OCI-LY7 (cell line): ENCODE measurements at regions of chr10 and their contacts with region 1.

Region 1: GRCh38 chr10:26437637-26438461 is at the start of gene APBB1IP:
- DNase-seq: peak; percentile 94
- H3K4me3 ChIP-seq: peak within 1 kb of the TSS; percentile 93
- H3K27ac ChIP-seq: peak within 1 kb of the TSS; percentile 92
- H3K4me1 ChIP-seq: peaks cover 42% of the 10 kb centered on the region
- CTCF ChIP-seq: no peak
- total RNA-seq, gene APBB1IP: 58.1 and 65.8 TPM in 2 replicates

Region 2: GRCh38 chr10:26310361-26310760 is 127.5 kb before region 1 on chr10:
- CTCF ChIA-PET with region 1: no interaction called
- POLR2A ChIA-PET with region 1: no interaction called
- intact Hi-C with region 1: loop called (anchors 1 kb)
- DNase-seq: peak; percentile 95
- H3K4me3 ChIP-seq: peak overlapping the region; percentile 66
- H3K27ac ChIP-seq: peak overlapping the region; percentile 88
- H3K4me1 ChIP-seq: peaks cover 63% of the 10 kb centered on the region
- CTCF ChIP-seq: no peak

Region 3: GRCh38 chr10:26372513-26373354 is 65.1 kb before region 1 on chr10:
- CTCF ChIA-PET with region 1: no interaction called
- POLR2A ChIA-PET with region 1: interaction called, 4 read pairs
- intact Hi-C with region 1: loop called (anchors 1 kb)
- DNase-seq: peak; percentile 85
- H3K4me3 ChIP-seq: peak overlapping the region; percentile 54
- H3K27ac ChIP-seq: peak overlapping the region; percentile 93
- H3K4me1 ChIP-seq: peaks cover 43% of the 10 kb centered on the region
- CTCF ChIP-seq: no peak; the same call in 1 of the 2 replicates

Region 4: GRCh38 chr10:26457088-26457487 is 19.2 kb after region 1 on chr10:
- CTCF ChIA-PET with region 1: interaction called, 3 read pairs
- POLR2A ChIA-PET with region 1: interaction called, 26 read pairs
- intact Hi-C with region 1: loop called (anchors 2 kb)
- DNase-seq: peak; percentile 94
- H3K4me3 ChIP-seq: peak overlapping the region; percentile 57
- H3K27ac ChIP-seq: peak overlapping the region; percentile 95
- H3K4me1 ChIP-seq: peaks cover 78% of the 10 kb centered on the region
- CTCF ChIP-seq: no peak

Region 5: DNA sequence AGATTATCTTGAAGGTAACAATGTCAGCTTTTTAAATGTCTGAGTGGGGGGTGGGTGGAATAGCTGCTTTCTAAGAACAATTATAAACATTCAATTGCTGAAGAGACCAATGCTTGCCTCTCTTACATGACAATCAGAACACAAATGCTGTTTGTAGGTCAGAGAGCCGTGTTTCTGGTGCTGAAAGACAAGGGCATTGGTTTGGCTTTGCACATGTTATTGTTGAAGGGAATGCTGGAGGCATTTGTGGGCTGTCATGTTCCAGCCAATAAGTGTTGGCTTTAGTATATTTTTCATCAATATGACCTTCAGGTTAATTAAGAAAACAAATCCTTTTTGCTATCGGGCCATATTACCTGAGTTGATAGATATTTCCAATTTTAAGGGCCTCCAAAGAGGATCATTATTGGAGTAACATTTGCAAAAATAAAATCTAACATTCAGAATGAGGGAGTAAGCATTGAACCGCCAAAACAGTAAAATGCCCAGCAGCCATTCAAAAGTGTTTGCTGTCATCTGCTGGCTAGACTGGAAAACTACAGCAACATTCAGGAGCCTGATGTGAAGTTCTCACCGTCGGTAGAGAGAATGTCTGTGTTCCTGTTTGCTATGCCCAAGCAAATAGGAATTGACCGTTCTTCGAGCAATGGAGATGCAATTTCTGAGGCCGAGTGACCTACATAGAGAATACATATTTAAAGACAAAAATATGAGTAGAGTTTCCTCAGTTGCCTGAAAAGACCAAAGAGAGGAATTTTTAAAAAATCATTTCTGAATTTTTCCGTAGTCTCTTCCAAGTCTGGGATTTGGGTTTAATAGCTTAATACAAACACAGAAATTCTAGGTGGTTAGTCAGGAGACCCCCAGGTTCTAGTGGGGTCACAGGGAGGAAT is 119.1 kb after region 1 on chr10:
- CTCF ChIA-PET with region 1: no interaction called
- POLR2A ChIA-PET with region 1: interaction called, 3 read pairs
- intact Hi-C with region 1: loop called (anchors 1 kb)
- DNase-seq: peak; percentile 67
- H3K4me3 ChIP-seq: no peak overlapping the region
- H3K27ac ChIP-seq: peak overlapping the region; percentile 15
- H3K4me1 ChIP-seq: no peaks in the 10 kb centered on the region
- CTCF ChIP-seq: peak; percentile 94

Region 6: GRCh38 chr10:26588611-26589010 is 150.8 kb after region 1 on chr10:
- CTCF ChIA-PET with region 1: no interaction called
- POLR2A ChIA-PET with region 1: no interaction called
- intact Hi-C with region 1: no loop called
- DNase-seq: no peak
- H3K4me3 ChIP-seq: no peak overlapping the region
- H3K27ac ChIP-seq: no peak overlapping the region
- H3K4me1 ChIP-seq: no peaks in the 10 kb centered on the region
- CTCF ChIP-seq: no peak

Region 7: DNA sequence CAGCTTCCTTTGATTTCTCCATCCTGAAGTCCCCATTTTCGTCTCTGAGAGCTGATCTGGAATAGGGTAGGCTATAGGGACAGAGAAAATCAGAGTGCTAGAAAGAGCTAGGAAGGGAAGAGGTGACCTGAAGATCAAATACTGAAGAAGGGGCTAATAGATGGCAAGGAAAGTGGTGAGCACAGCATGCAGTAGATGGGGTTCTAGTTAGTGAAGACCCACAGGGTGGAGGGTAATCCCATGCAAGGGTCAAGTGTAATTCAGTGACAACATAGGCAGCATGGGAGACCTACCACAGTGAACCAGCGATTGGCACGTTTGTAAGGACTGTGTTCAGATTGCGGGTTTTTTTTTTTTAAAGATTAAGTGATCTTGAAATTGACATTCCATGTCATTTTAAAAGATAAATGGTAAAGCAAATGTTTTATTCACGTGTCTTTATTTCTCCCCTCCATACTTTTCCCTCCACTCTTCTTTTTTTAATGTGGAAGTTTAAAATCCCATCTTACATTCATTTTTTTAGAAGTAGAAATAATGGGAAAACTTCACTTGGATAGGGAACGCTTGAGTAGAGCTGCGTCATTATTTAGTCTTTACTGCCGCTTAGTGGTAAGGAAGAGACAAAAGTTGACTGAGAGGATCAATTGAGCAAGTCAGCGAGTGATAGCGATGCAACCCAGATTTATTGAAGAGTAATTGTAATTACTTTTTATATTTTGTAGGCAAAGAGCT is 443.9 kb after region 1 on chr10:
- CTCF ChIA-PET with region 1: no interaction called
- POLR2A ChIA-PET with region 1: no interaction called
- intact Hi-C with region 1: no loop called
- DNase-seq: peak; percentile 78
- H3K4me3 ChIP-seq: no peak overlapping the region
- H3K27ac ChIP-seq: no peak overlapping the region
- H3K4me1 ChIP-seq: peaks cover 5% of the 10 kb centered on the region
- CTCF ChIP-seq: peak; percentile 88

Region 8: GRCh38 chr10:27241652-27242472 is 804.0 kb after region 1 on chr10:
- CTCF ChIA-PET with region 1: no interaction called
- POLR2A ChIA-PET with region 1: no interaction called
- intact Hi-C with region 1: loop called (anchors 5 kb)
- DNase-seq: peak; percentile 96
- H3K4me3 ChIP-seq: peak overlapping the region; percentile 93
- H3K27ac ChIP-seq: peak overlapping the region; percentile 96
- H3K4me1 ChIP-seq: peaks cover 31% of the 10 kb centered on the region
- CTCF ChIP-seq: peak; percentile 77